Right ventricle myocardium inferior (tissue), 1 donor: ENCODE measurements at regions of chr1 and their contacts with region 1.

Region 1: GRCh38 chr1:21924503-21925005 is 12.6 kb downstream of the HSPG2 start:
- DNase-seq: peak; percentile 60
- ATAC-seq: no peak

Region 2: GRCh38 chr1:21909787-21910503 is 14.6 kb before region 1 on chr1:
- intact Hi-C with region 1: loop called (anchors 2 kb)
- DNase-seq: peak; percentile 78
- ATAC-seq: peak; percentile 45